ENCODE measurements at regions of chr3 and their contacts with region 1.

Region 1: GRCh38 chr3:50272911-50273693 is 4.2 kb downstream of the SEMA3B start:
- DNase-seq: peak; percentile 93
- H3K4me3 Mint-ChIP-seq: peak overlapping the region; percentile 39
- H3K27ac Mint-ChIP-seq: no peak overlapping the region
- H3K4me1 Mint-ChIP-seq: peaks cover 31% of the 10 kb centered on the region
- H3K27me3 Mint-ChIP-seq: peaks cover 34% of the 10 kb centered on the region

Region 2: GRCh38 chr3:50121416-50122032 is 151.6 kb before region 1 on chr3:
- CTCF ChIA-PET with region 1: interaction called, 4 read pairs
- intact Hi-C with region 1: loop called (anchors 1 kb)
- DNase-seq: peak; percentile 86
- H3K4me3 Mint-ChIP-seq: no peak overlapping the region
- H3K27ac Mint-ChIP-seq: no peak overlapping the region
- H3K4me1 Mint-ChIP-seq: no peaks in the 10 kb centered on the region
- H3K27me3 Mint-ChIP-seq: no peaks in the 10 kb centered on the region

Region 3: GRCh38 chr3:50245831-50246516 is 27.1 kb before region 1 on chr3:
- CTCF ChIA-PET with region 1: interaction called, 15 read pairs
- intact Hi-C with region 1: loop called (anchors 1 kb)
- DNase-seq: peak; percentile 97
- H3K4me3 Mint-ChIP-seq: peak overlapping the region; percentile 81
- H3K27ac Mint-ChIP-seq: peak overlapping the region; percentile 95
- H3K4me1 Mint-ChIP-seq: peaks cover 82% of the 10 kb centered on the region
- H3K27me3 Mint-ChIP-seq: no peaks in the 10 kb centered on the region

Region 4: GRCh38 chr3:50260027-50260941 is 12.8 kb before region 1 on chr3:
- CTCF ChIA-PET with region 1: interaction called, 9 read pairs
- intact Hi-C with region 1: loop called (anchors 1 kb)
- DNase-seq: peak; percentile 88
- H3K4me3 Mint-ChIP-seq: peak overlapping the region; percentile 66
- H3K27ac Mint-ChIP-seq: peak overlapping the region; percentile 69
- H3K4me1 Mint-ChIP-seq: peaks cover 4% of the 10 kb centered on the region
- H3K27me3 Mint-ChIP-seq: no peaks in the 10 kb centered on the region

Region 5: GRCh38 chr3:50321336-50322114 is 48.4 kb after region 1 on chr3:
- CTCF ChIA-PET with region 1: interaction called, 4 read pairs
- intact Hi-C with region 1: loop called (anchors 1 kb)
- DNase-seq: peak; percentile 83
- H3K4me3 Mint-ChIP-seq: peak overlapping the region; percentile 86
- H3K27ac Mint-ChIP-seq: peak overlapping the region; percentile 80
- H3K4me1 Mint-ChIP-seq: peaks cover 38% of the 10 kb centered on the region
- H3K27me3 Mint-ChIP-seq: no peaks in the 10 kb centered on the region

Region 6: DNA sequence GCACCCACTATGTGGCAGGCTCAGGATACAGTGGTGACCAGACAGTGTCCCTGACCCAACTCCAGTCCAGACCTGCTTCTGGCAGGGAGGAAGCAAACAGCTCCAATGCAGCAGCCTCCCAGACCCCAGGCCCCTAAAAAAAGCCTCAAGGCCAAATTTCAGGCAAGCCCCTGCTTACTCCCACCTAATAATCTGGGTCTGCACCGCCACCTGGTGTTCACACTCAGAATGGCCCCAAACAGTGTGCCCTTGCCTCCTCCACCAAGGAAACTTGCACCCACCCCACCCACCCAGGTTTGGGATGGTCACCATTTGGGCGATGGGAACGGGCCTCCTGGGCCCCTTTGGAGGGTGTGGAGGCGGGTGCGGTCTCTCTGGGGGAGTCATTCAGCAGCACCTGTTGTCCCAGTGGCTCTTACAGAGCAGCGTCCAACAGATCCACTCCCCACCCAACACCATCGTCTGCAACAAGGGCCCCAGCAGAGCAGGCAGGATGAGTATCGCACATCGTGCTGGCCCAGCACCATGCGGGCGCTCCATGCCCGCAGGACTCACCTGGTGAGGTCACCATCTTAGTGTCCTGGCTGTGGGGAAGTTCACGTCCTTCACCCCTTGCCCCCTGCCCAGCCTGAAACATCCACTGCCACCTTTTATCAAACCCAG is 277.1 kb after region 1 on chr3:
- CTCF ChIA-PET with region 1: no interaction called
- intact Hi-C with region 1: loop called (anchors 1 kb)
- DNase-seq: peak; percentile 83
- H3K4me3 Mint-ChIP-seq: no peak overlapping the region
- H3K27ac Mint-ChIP-seq: no peak overlapping the region
- H3K4me1 Mint-ChIP-seq: no peaks in the 10 kb centered on the region
- H3K27me3 Mint-ChIP-seq: no peaks in the 10 kb centered on the region

Region 7: DNA sequence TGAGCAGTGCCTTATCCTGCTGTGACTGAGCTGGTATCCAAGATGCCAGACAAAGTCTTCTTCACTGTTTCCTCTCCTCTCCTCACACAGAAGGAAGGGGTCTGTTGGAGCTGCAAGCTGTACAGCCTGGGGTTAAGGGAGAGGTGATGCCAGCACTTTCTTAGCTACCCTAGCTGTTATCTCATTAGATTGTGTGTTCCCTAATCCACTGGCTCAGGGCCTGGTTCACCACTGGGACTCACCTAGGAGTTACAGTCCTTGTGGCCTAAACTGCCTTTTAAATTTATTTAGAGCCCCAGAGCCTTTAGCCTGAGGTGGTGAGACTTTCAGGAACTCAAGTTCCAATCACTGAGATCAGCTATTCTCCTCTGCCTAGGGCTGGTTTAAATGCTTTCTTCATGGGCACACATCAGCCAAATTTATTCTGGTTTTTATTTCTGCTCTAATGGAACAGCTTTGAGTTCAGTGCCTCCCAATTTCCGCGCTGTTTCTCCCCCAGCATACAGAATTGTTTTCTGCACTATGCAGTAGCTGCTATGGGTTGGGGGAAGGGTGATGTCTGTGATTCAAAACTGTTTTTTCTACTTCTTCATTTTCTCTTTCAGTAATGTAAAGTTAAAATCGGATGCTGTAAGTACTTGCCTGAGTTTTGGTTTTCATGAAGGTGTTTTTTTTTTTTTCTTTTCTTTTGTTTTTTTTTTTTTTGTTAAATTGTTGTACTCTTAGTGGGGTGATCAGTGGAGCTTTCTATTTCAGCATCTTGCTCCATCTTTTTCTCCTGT is 600.5 kb after region 1 on chr3:
- CTCF ChIA-PET with region 1: no interaction called
- intact Hi-C with region 1: no loop called
- DNase-seq: no peak
- H3K4me3 Mint-ChIP-seq: no peak overlapping the region
- H3K27ac Mint-ChIP-seq: no peak overlapping the region
- H3K4me1 Mint-ChIP-seq: no peaks in the 10 kb centered on the region
- H3K27me3 Mint-ChIP-seq: peaks cover 9% of the 10 kb centered on the region

Measured in activated naive CD4-positive, alpha-beta T cell treated with anti-CD3 and anti-CD28 coated beads for 36 hours (primary cell).